K562 (cell line): ENCODE measurements at regions of chr6 and their contacts with region 1.

Region 1: DNA sequence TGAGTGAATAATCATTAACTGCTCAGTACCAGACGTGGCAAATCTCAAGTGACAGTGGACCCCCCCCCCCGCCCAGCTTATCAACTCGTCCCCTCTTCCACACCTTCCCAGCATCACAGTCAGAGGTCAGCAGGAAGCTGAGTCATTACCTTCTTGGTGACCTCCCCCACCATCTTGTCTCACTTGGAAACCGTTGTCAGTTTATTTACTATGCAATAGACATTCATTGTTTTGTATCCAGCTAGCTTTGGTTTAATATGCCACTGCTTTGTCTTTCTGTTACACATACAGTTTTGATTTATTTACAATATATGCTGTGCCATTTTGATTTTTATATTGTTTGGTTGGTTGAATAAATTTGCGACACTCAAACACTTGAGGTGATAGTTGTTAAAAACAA is 158.1 kb downstream of the QKI start:
- DNase-seq: peak; percentile 89 to 96 (median 92)
- ATAC-seq: peak; percentile 79
- H3K4me3 ChIP-seq: no peak overlapping the region
- H3K27ac ChIP-seq: peak overlapping the region; percentile 80
- H3K4me1 ChIP-seq: peaks cover 6 to 55% of the 10 kb centered on the region in 2 experiments
- H3K27me3 ChIP-seq: no peaks in the 10 kb centered on the region
- CTCF ChIP-seq: no peak
- EP300 ChIP-seq: peak; percentile 91; the same call in 1 of the 2 replicates
- POLR2A ChIP-seq: no peak
- RAD21 ChIP-seq: no peak

Region 2: DNA sequence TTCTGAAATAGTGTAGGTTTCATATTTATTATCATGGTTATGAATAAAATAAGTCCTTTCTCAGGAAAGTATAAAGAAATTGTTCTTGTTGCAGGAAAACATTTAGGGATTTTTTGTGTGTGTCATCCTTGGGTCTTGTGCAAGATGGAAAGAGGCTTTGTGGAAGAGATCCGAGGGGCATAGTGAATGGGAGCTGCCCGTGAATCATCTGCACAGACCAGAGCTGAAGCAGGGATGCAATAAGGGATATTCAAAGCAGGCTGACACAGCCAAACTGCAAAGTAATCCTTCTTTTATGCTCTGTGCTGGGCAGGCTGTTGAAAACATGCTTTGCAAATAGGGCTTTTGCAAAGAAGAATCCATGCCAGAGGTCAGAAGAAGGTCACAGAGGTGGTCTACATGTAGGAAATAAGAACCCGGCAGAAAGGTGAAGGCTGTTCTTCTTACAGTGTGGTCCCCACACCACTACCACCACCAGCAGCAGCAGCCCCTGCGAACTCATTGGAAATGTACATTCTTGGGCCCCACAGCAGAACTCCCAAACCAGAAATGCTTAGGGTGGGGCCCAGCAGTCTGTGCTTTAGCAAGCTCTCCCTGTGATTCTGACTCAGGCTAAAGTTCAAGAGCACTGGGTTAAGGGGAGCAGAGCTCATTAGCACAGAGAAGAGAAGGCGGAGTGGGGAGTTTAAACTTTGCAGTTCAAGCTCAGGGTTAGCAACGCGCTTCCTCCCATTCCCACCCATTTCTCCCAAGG is 79.5 kb after region 1 on chr6:
- CTCF ChIA-PET with region 1: no interaction called
- POLR2A ChIA-PET with region 1: no interaction called
- in situ Hi-C with region 1: no loop called
- intact Hi-C with region 1: no loop called
- DNase-seq: no peak
- ATAC-seq: no peak; the same call in 2 of the 3 replicates
- H3K4me3 ChIP-seq: no peak overlapping the region
- H3K27ac ChIP-seq: no peak overlapping the region
- H3K4me1 ChIP-seq: no peaks in the 10 kb centered on the region
- H3K27me3 ChIP-seq: peaks cover 25 to 36% of the 10 kb centered on the region in 2 experiments; a peak in 4 of 5 replicates
- CTCF ChIP-seq: no peak
- EP300 ChIP-seq: no peak
- POLR2A ChIP-seq: no peak
- RAD21 ChIP-seq: no peak

Region 3: DNA sequence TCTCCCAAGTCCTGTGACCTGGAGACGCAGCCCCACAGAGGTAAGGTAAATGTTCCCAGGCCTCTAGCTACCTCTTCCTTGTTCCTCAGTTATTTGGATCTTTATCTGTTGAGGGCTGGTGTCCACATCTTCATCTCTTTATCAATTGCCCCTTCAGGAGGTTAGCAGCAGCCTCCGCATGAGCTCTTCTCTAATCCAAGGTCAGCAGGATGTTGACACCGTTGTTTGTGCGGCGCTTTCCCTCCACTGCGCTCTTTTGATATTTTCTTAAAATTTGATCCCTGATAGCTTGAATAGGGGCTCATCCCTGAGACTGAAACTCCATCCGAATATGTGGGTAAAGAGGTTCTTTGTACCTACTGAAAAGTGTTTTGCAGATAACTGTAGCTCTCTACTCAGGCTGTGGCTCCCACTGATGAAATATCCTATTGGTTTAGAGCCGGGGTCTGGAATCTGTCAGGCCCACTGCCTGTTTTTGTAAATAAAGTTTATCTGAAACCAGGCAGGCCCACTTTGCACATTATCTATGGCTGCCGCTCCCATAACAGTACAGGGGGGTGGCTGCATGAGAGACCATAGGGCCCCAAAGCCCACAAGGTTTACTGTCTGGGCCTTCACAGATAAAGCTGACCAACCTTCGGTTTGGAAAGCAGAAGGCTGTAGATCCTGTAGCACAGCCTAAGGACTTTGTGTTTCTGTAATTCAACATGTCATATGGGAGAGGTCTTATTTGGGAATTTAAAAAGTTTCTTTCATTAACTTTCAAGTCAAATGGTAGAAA is 204.5 kb after region 1 on chr6:
- CTCF ChIA-PET with region 1: no interaction called
- POLR2A ChIA-PET with region 1: no interaction called
- in situ Hi-C with region 1: no loop called
- intact Hi-C with region 1: loop called (anchors 5 kb)
- DNase-seq: peak; percentile 77 to 98 (median 88)
- ATAC-seq: peak; percentile 98
- H3K4me3 ChIP-seq: peak overlapping the region; percentile 8; the same call in 1 of the 2 replicates
- H3K27ac ChIP-seq: peak overlapping the region; percentile 82
- H3K4me1 ChIP-seq: peaks cover 17 to 33% of the 10 kb centered on the region in 2 experiments; a peak in 4 of 5 replicates
- H3K27me3 ChIP-seq: no peaks in the 10 kb centered on the region
- CTCF ChIP-seq: no peak
- EP300 ChIP-seq: peak; percentile 99
- POLR2A ChIP-seq: peak; percentile 69; the same call in 1 of the 2 replicates
- RAD21 ChIP-seq: no peak; a peak in 1 of 4 replicates